HepG2 (cell line): ENCODE measurements at regions of chr17 and their contacts with region 1.

Region 1: DNA sequence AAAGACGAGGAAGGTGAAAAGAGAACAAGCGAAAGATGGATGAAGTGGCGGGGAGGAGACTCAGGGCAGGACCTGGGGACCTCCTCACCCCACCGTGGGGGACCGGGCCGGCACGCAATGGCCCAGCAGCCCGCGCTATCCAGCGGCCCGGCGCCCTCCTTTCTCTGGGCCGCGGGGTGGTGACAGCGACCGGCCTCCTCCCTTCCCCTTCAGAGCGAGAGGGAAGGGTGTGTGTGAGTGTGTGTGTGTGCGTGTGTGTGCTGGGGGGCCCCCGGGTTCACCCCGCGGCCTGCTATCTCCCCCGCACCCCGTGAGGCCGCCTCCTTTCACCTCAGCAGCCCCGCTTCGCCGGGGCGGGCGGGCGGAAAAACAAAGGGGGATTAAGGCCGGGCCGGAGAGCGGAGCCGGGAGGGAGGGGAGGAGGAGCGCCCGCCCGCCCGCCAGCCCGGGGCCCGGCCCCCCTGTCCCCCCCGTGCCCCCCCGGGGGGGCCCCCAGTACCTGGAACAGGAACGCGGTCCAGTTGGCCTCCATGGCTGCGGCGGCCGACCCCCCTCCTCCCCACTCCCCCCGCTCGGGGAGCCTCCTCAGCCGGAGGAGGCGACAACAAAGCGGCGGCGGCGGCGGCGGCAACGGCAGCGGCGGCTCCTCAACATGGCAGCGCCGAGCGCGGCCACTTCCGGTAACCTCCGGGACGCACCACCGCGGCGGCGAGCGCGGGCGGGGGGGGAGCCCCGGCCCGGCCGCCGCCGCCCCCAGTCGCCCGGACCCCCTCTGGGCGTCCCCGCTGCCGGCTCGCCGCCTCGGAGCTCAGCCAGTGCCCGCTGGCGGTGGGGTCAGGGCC is at the start of gene VEZF1:
- DNase-seq: peak; percentile 68
- ATAC-seq: peak; percentile 61
- H3K4me3 ChIP-seq: peak within 1 kb of the TSS; percentile 71 to 95 (median 83)
- H3K27ac ChIP-seq: peak within 1 kb of the TSS; percentile 80
- H3K4me1 ChIP-seq: peaks cover 82% of the 10 kb centered on the region
- H3K27me3 ChIP-seq: no peaks in the 10 kb centered on the region; a peak in 1 of 5 replicates
- CTCF ChIP-seq: peak; percentile 12; the same call in 1 of the 2 replicates
- EP300 ChIP-seq: no peak; a peak in 1 of 4 replicates
- POLR2A ChIP-seq: peak in 1 of 2 experiments; percentile 27; a peak in 3 of 4 replicates
- RAD21 ChIP-seq: peak; percentile 35
- total RNA-seq, gene VEZF1: 45.9 and 48.0 TPM in 2 replicates

Region 2: GRCh38 chr17:57861000-57861789 is 126.6 kb before region 1 on chr17:
- CTCF ChIA-PET with region 1: no interaction called
- POLR2A ChIA-PET with region 1: interaction called, 173 read pairs
- in situ Hi-C with region 1: no loop called
- intact Hi-C with region 1: no loop called
- DNase-seq: peak; percentile 94
- ATAC-seq: peak; percentile 56
- H3K4me3 ChIP-seq: peak overlapping the region; percentile 71 to 90 (median 81)
- H3K27ac ChIP-seq: peak overlapping the region; percentile 77
- H3K4me1 ChIP-seq: peaks cover 68% of the 10 kb centered on the region
- H3K27me3 ChIP-seq: no peaks in the 10 kb centered on the region; a peak in 1 of 5 replicates
- CTCF ChIP-seq: peak; percentile 26; the same call in 1 of the 2 replicates
- EP300 ChIP-seq: peak in 1 of 2 experiments; percentile 90; a peak in 2 of 4 replicates
- POLR2A ChIP-seq: peak; percentile 46 to 72; a peak in 2 of 4 replicates
- RAD21 ChIP-seq: no peak

Region 3: GRCh38 chr17:57875309-57876115 is 112.3 kb before region 1 on chr17:
- CTCF ChIA-PET with region 1: no interaction called
- POLR2A ChIA-PET with region 1: interaction called, 13 read pairs
- in situ Hi-C with region 1: no loop called
- intact Hi-C with region 1: loop called (anchors 2 kb)
- DNase-seq: peak; percentile 93
- ATAC-seq: peak; percentile 85
- H3K4me3 ChIP-seq: peak overlapping the region in 1 of 3 experiments; percentile 15; a peak in 1 of 6 replicates
- H3K27ac ChIP-seq: peak overlapping the region; percentile 64
- H3K4me1 ChIP-seq: peaks cover 68% of the 10 kb centered on the region
- H3K27me3 ChIP-seq: no peaks in the 10 kb centered on the region
- CTCF ChIP-seq: peak; percentile 62
- EP300 ChIP-seq: peak in 1 of 2 experiments; percentile 51; a peak in 1 of 4 replicates
- POLR2A ChIP-seq: no peak
- RAD21 ChIP-seq: peak; percentile 60; the same call in 1 of the 2 replicates

Region 4: GRCh38 chr17:57902800-57903759 is 84.7 kb before region 1 on chr17:
- CTCF ChIA-PET with region 1: no interaction called
- POLR2A ChIA-PET with region 1: interaction called, 11 read pairs
- in situ Hi-C with region 1: no loop called
- intact Hi-C with region 1: no loop called
- DNase-seq: peak; percentile 97
- ATAC-seq: peak; percentile 89
- H3K4me3 ChIP-seq: peak overlapping the region in 1 of 3 experiments; percentile 39; a peak in 1 of 6 replicates
- H3K27ac ChIP-seq: peak overlapping the region; percentile 87
- H3K4me1 ChIP-seq: peaks cover 91% of the 10 kb centered on the region
- H3K27me3 ChIP-seq: no peaks in the 10 kb centered on the region
- CTCF ChIP-seq: peak; percentile 27; the same call in 1 of the 2 replicates
- EP300 ChIP-seq: peak; percentile 57 to 85; a peak in 3 of 4 replicates
- POLR2A ChIP-seq: peak; percentile 42 to 45; a peak in 1 of 4 replicates
- RAD21 ChIP-seq: no peak; the same call in 1 of the 2 replicates

Region 5: GRCh38 chr17:57939797-57940196 is 48.0 kb before region 1 on chr17:
- CTCF ChIA-PET with region 1: no interaction called
- POLR2A ChIA-PET with region 1: interaction called, 4 read pairs
- in situ Hi-C with region 1: no loop called
- intact Hi-C with region 1: loop called (anchors 1 kb)
- DNase-seq: no peak
- ATAC-seq: no peak
- H3K4me3 ChIP-seq: no peak overlapping the region
- H3K27ac ChIP-seq: no peak overlapping the region
- H3K4me1 ChIP-seq: peaks cover 74% of the 10 kb centered on the region
- H3K27me3 ChIP-seq: no peaks in the 10 kb centered on the region
- CTCF ChIP-seq: no peak
- EP300 ChIP-seq: no peak
- POLR2A ChIP-seq: no peak
- RAD21 ChIP-seq: no peak

Region 6: GRCh38 chr17:57955183-57955931 is 32.4 kb before region 1 on chr17 and contains the start of gene CUEDC1:
- CTCF ChIA-PET with region 1: no interaction called
- POLR2A ChIA-PET with region 1: interaction called, 23 read pairs
- in situ Hi-C with region 1: no loop called
- intact Hi-C with region 1: loop called (anchors 2 kb)
- DNase-seq: no peak
- ATAC-seq: peak; percentile 75
- H3K4me3 ChIP-seq: peak within 1 kb of the TSS; percentile 71 to 92 (median 73)
- H3K27ac ChIP-seq: peak within 1 kb of the TSS; percentile 15
- H3K4me1 ChIP-seq: peaks cover 65% of the 10 kb centered on the region
- H3K27me3 ChIP-seq: peaks cover 16 to 39% of the 10 kb centered on the region in 2 experiments
- CTCF ChIP-seq: peak; percentile 52
- EP300 ChIP-seq: no peak
- POLR2A ChIP-seq: no peak
- RAD21 ChIP-seq: 0 out of 2 replicates have a peak, but pooled peaks have one; percentile 6
- total RNA-seq, gene CUEDC1: 4.2 and 7.4 TPM in 2 replicates

Region 7: GRCh38 chr17:57975044-57975443 is 12.8 kb before region 1 on chr17:
- CTCF ChIA-PET with region 1: no interaction called
- POLR2A ChIA-PET with region 1: interaction called, 16 read pairs
- in situ Hi-C with region 1: no loop called
- intact Hi-C with region 1: no loop called
- DNase-seq: peak; percentile 60
- ATAC-seq: peak; percentile 92
- H3K4me3 ChIP-seq: no peak overlapping the region; a peak in 1 of 6 replicates
- H3K27ac ChIP-seq: peak overlapping the region; percentile 1
- H3K4me1 ChIP-seq: peaks cover 42% of the 10 kb centered on the region
- H3K27me3 ChIP-seq: no peaks in the 10 kb centered on the region
- CTCF ChIP-seq: no peak
- EP300 ChIP-seq: peak; percentile 28 to 29; a peak in 2 of 4 replicates
- POLR2A ChIP-seq: no peak
- RAD21 ChIP-seq: no peak